Thyroid gland (tissue), 4 donors: ENCODE measurements at regions of chr15 and their contacts with region 1.

Region 1: GRCh38 chr15:65603134-65603533 is 7.8 kb downstream of the INTS14 start:
- DNase-seq: no peak
- H3K4me3 ChIP-seq: no peak overlapping the region
- H3K27ac ChIP-seq: no peak overlapping the region
- H3K4me1 ChIP-seq: no peaks in the 10 kb centered on the region
- H3K27me3 ChIP-seq: no peaks in the 10 kb centered on the region
- CTCF ChIP-seq: no peak
- POLR2A ChIP-seq: no peak

Region 2: DNA sequence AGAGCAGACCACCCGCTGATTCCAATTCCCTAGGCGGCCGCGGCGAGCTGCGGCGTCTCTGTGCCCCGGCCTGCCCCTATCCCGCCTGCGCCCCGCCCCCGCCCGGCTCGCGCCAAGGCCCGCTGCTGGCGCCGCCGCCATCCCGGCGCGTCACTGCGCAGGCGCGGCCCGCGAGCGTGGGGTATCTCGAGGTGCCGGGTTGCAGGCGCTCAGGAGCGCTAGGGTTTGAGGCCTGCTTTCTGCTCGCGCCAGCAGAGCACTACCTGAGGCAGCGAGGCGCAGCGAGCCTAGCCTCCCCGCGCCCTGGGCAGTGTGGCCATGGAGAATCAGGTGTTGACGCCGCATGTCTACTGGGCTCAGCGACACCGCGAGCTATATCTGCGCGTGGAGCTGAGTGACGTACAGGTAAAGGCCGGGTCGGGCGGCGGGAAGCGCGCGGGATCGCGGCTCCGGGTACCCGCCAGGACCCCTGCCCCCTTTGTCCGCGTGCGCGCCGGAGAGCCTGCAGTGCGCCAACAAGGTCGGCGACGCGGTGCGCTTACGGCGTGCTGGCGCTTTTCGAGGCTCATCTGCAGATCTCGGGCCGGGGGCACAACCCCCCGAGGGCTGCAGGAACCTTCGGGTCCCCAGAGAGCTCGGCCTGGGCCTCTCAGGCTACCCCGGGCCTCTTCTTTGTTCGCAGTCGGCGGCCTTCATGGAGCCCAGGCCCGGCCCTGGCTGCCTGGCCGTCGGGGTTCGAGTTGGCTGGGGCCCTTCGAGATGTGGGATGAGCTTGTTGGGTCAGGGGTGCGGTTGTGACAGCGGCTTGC is 72.6 kb before region 1 on chr15 and contains the start of gene HACD3:
- intact Hi-C with region 1: loop called (anchors 10 kb)
- DNase-seq: peak; percentile 89 to 90
- H3K4me3 ChIP-seq: peak within 1 kb of the TSS; percentile 37 to 85 (median 77)
- H3K27ac ChIP-seq: peak within 1 kb of the TSS; percentile 75 to 79 (median 78)
- H3K4me1 ChIP-seq: peaks cover 9 to 17% of the 10 kb centered on the region in 2 donors
- H3K27me3 ChIP-seq: no peaks in the 10 kb centered on the region
- CTCF ChIP-seq: no peak
- POLR2A ChIP-seq: peak in 1 of 2 donors; percentile 77
- total RNA-seq, gene HACD3: 103 to 172 (median 128) TPM